ENCODE measurements at regions of chr12 and their contacts with region 1.

Region 1: DNA sequence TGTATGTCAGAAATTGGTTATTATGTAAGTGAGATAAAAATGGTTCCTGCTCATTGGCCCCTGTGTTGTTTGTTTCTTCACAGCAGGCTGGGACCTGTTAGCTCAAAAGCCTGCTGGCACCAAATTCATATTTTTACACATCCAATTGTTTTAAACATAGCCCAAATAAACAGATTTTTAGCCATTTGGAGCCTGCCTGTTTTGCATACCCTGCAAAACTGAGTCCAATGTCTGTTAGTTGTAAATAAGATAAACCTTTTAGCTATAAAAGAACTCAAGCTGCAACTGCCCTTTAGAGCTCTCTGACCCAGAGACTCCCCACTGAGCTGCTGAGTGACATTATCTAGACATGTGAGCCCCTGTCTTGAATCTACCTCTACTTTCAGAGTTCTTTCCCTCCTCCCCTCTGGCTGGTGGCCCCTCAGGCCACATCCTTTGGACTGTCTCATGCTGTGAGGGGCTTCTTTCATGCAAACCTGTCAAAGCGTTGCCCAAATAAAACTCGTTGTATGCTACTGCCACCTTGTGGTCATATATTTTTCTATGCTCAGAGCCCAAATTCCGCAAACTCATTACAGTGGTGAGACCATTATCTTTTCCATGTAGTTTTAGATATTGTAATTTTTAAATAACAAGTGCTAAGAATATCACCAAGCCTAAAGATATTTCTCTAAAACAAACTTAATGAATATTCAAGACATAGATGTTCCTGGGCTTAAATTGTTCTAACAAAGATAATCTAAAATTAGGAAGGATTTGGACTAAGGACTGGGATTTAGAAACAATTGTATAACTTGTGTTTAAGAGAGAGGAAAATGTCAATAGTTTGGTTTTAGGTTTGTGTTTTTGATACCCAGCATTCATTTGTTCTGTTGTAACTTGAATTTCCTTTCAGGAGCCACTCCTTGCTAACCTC is 337.9 kb downstream of the AACS start:
- DNase-seq: peak; percentile 77
- ATAC-seq: peak; percentile 55
- H3K4me3 ChIP-seq: no peak overlapping the region
- H3K27ac ChIP-seq: no peak overlapping the region
- H3K4me1 ChIP-seq: no peaks in the 10 kb centered on the region
- H3K27me3 ChIP-seq: peaks cover 27% of the 10 kb centered on the region; the same call in 1 of the 2 replicates
- CTCF ChIP-seq: peak; percentile 93

Region 2: DNA sequence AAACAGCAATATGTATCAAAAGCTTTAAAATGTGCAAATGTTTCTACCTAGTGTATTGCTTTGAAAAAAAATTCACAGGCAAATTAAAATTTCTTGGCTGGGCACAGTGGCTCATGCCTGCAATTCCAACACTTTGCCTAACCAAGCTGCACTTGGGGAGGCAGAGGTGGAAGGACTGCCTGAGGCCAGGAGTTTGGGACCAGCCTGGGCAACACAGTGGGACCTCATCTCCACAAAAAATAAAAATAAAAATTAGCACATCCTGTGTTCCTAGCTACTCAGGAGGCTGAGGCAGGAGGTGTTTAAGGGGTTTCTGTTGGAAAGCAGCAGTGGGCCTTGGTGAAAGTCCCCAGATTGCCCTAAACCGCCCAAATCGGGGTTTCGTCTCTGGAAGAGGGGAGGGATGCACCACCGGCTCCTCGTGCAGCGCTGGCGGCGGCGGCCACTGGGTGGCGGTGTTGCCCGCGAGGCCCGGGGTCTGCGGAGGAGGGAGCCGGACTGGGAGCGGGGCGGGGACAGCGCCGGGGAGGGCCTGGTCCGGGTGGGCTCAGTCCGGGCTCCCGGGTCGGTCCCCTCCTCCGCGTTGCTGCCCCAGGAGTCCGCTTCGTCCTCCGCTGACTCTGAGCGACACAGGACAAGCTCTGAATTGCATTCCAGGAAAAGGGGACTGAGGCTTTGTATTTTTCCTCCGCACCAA is 72.3 kb before region 1 on chr12:
- CTCF ChIA-PET with region 1: no interaction called
- POLR2A ChIA-PET with region 1: no interaction called
- intact Hi-C with region 1: loop called (anchors 1 kb)
- DNase-seq: peak; percentile 57
- ATAC-seq: peak; percentile 98
- H3K4me3 ChIP-seq: peak overlapping the region; percentile 30; the same call in 1 of the 2 replicates
- H3K27ac ChIP-seq: no peak overlapping the region
- H3K4me1 ChIP-seq: no peaks in the 10 kb centered on the region
- H3K27me3 ChIP-seq: peaks cover 83% of the 10 kb centered on the region
- CTCF ChIP-seq: peak; percentile 90

Region 3: DNA sequence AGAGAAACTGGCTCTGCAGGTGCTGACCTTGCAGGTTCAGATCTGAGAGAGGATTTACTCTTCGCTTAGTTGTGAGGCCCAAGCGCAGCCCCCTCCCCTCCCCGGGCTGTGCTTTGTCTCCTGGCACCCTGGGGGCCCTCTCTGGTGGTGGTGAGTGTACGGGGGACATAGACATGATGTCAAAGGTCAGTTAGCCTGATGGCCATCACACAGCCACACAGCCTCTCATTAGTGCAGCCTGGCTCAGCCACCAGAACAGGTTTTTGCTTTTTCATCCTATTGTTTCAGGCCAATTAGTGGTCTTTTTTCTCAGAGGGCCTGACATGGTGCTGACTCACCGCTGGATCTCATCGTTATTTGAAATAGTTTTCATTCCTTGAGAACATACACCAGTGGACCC is 100.0 kb after region 1 on chr12:
- CTCF ChIA-PET with region 1: no interaction called
- POLR2A ChIA-PET with region 1: no interaction called
- intact Hi-C with region 1: no loop called
- DNase-seq: no peak
- ATAC-seq: no peak
- H3K4me3 ChIP-seq: no peak overlapping the region
- H3K27ac ChIP-seq: no peak overlapping the region
- H3K4me1 ChIP-seq: no peaks in the 10 kb centered on the region
- H3K27me3 ChIP-seq: no peaks in the 10 kb centered on the region
- CTCF ChIP-seq: no peak